Activated T-helper 1 cell treated with anti-CD3 and anti-CD28 coated beads, Interleukin-12 subunit alpha, Interleukin-12 subunit beta, Interleukin-2, Interleukin-4 antibody, amounts not matched to agents 30 ng/mL and 10 ng/mL and 1 ng/mL, durations not matched to agents 14 hours and 24 hours and 36 hours (primary cell): ENCODE measurements at regions of chr11 and their contacts with region 1.

Region 1: DNA sequence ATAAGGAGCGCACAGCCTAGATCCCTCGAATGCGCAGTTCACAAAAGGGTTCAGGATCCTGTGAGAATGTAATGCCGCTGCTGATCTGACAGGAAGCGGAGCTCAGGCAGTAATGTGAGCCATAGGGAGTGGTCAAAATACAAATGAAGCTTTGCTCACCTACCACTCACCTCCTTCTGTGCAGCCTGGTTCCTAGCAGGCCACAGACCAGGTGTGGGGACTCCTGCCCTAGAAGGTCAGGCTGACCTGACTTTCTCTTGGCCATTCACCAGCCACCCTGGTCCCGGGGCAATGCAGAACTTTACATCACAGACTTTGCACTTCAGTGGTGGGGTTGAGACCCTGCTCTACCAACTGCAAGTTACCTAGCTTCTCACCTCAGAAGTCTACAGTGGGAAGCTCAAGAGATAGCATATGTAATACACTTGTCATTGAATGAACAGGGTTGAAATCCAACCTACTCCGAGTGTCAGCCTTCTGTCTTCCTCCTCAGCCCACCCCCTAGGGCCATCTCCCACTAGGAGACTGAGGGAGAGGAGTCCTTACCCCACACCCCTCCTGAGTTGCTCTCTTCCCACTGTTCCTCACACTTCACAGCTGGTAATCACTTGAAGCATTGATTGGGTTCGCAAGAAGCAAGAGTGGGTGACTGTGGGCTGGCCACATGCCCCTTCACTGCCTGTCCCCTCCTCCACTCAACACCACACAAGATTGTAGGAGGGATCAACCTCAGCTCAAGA is 1.9 kb upstream of the KCNJ1 start:
- DNase-seq: no peak
- H3K4me3 Mint-ChIP-seq: no peak overlapping the region
- H3K27ac Mint-ChIP-seq: no peak overlapping the region
- H3K4me1 Mint-ChIP-seq: no peaks in the 10 kb centered on the region
- H3K27me3 Mint-ChIP-seq: peaks cover 13% of the 10 kb centered on the region

Region 2: GRCh38 chr11:128917144-128917724 is 48.2 kb after region 1 on chr11:
- intact Hi-C with region 1: no loop called
- DNase-seq: no peak
- H3K4me3 Mint-ChIP-seq: no peak overlapping the region
- H3K27ac Mint-ChIP-seq: no peak overlapping the region
- H3K4me1 Mint-ChIP-seq: peaks cover 4% of the 10 kb centered on the region
- H3K27me3 Mint-ChIP-seq: peaks cover 2% of the 10 kb centered on the region

Region 3: DNA sequence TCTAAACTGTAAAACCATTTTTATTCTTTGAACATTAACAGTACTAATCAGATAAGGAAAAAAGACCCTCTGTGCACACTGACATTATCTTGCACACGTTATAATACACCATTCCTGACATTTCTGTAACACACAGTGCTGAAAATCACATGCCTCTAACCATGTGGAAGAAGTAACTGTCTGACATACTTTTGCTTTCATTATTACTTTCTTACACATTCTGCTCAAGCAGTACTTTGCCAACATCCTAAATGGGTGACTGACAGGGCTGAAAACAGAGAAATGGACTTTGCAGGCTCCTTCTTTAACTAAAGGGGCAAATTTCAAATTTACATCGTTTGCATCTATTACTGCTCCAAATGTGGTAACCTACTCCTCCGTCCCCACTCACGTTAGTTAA is 96.5 kb after region 1 on chr11:
- intact Hi-C with region 1: loop called (anchors 5 kb)
- DNase-seq: peak; percentile 6
- H3K4me3 Mint-ChIP-seq: peak overlapping the region; percentile 41
- H3K27ac Mint-ChIP-seq: peak overlapping the region; percentile 53
- H3K4me1 Mint-ChIP-seq: peaks cover 66% of the 10 kb centered on the region
- H3K27me3 Mint-ChIP-seq: no peaks in the 10 kb centered on the region

Region 4: GRCh38 chr11:129061466-129062194 is 192.6 kb after region 1 on chr11:
- intact Hi-C with region 1: no loop called
- DNase-seq: no peak
- H3K4me3 Mint-ChIP-seq: no peak overlapping the region
- H3K27ac Mint-ChIP-seq: no peak overlapping the region
- H3K4me1 Mint-ChIP-seq: no peaks in the 10 kb centered on the region
- H3K27me3 Mint-ChIP-seq: peaks cover 2% of the 10 kb centered on the region